Caco-2 (cell line): ENCODE measurements at regions of chr2 and their contacts with region 1.

Region 1: GRCh38 chr2:126244937-126245336 is 411.0 kb upstream of the GYPC start:
- DNase-seq: peak; percentile 62 to 72
- H3K4me3 ChIP-seq: no peak overlapping the region
- H3K4me3 Mint-ChIP-seq: no peak overlapping the region
- H3K27ac Mint-ChIP-seq: no peak overlapping the region
- H3K4me1 ChIP-seq: no peaks in the 10 kb centered on the region
- H3K4me1 Mint-ChIP-seq: no peaks in the 10 kb centered on the region
- H3K27me3 ChIP-seq: no peaks in the 10 kb centered on the region
- H3K27me3 Mint-ChIP-seq: no peaks in the 10 kb centered on the region
- CTCF ChIP-seq: peak; percentile 60 to 79

Region 2: DNA sequence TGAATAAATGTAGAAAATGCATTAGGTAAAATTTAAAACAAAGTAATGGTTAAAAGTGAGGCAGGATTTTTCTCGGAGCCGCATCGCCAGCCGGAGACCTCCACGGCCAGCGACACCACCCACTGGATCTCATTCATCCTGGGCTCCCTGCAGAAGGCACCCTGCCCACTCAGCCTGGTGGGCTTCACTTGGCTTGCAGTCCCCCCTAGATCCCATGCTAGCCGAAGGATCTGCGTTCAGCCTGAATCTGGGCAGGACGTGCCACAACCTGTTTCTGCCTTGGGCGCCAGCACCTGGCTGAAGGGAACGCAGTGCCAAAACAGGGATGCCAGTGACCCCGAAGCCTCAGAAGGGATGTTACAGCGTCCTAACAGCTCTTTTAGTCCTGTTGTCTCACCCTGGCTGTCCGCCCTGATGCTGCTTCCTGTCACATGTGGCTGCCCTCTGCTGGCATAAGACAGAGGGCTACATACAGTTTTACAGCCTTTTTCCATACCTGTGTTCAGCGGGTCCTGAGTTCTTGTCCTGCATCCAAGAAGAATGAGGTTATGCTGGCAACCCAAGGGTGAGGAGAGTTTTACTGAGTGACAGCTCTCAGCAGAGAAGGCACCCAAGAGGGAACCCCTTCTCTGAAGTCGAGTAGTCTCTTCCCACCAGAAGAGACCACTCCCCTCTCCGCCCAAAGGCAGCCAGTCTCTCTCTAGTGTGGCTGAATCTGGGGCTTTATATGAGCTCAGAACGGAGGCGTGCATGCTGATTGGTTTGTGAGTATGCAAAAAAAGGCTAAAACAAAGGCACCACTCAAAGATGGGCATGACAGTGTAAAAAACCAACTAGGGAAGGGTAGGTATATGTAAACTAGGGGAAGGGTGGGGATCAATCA is 237.9 kb after region 1 on chr2:
- CTCF ChIA-PET with region 1: no interaction called
- POLR2A ChIA-PET with region 1: no interaction called
- intact Hi-C with region 1: loop called (anchors 1 kb)
- DNase-seq: peak in 1 of 2 experiments; percentile 21
- H3K4me3 ChIP-seq: no peak overlapping the region
- H3K4me3 Mint-ChIP-seq: no peak overlapping the region
- H3K27ac Mint-ChIP-seq: no peak overlapping the region
- H3K4me1 ChIP-seq: no peaks in the 10 kb centered on the region
- H3K4me1 Mint-ChIP-seq: no peaks in the 10 kb centered on the region
- H3K27me3 ChIP-seq: no peaks in the 10 kb centered on the region
- H3K27me3 Mint-ChIP-seq: peaks cover 6% of the 10 kb centered on the region
- CTCF ChIP-seq: peak in 1 of 2 experiments; percentile 33

Region 3: DNA sequence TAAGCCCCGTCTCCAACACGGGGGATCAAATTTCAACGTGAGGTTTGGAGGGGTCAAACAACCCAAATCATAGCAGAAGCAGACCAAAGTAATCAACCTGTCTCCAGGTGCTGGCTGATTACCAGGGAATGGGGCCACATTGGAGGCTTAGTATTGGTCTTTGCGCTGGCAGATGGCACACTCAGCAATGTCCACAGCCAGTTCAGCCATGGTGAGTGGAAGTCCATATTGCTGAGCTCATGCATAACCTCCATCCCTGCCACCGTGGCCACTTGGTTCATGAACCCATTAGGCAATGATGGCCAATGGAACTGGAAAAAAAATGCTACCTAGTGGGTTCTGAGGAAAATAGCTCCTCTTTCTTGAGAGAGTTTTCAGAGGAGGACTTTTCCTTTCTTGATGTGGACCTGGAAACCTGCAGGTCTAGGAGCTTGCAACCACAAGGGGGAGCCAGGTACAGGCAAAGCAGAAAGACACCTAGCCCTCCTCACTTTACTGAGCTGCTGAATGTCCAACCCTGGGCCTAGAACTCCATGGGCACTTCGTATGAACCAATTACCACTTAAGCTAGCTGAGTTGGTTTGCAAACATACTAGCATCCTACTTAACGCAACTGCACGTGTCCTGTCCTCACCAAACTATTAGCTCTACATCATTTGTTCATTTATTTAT is 283.0 kb after region 1 on chr2:
- CTCF ChIA-PET with region 1: no interaction called
- POLR2A ChIA-PET with region 1: no interaction called
- intact Hi-C with region 1: loop called (anchors 1 kb)
- DNase-seq: peak; percentile 66 to 68
- H3K4me3 ChIP-seq: no peak overlapping the region
- H3K4me3 Mint-ChIP-seq: no peak overlapping the region
- H3K27ac Mint-ChIP-seq: no peak overlapping the region
- H3K4me1 ChIP-seq: no peaks in the 10 kb centered on the region
- H3K4me1 Mint-ChIP-seq: no peaks in the 10 kb centered on the region
- H3K27me3 ChIP-seq: no peaks in the 10 kb centered on the region
- H3K27me3 Mint-ChIP-seq: peaks cover 5% of the 10 kb centered on the region
- CTCF ChIP-seq: peak; percentile 58 to 76

Region 4: DNA sequence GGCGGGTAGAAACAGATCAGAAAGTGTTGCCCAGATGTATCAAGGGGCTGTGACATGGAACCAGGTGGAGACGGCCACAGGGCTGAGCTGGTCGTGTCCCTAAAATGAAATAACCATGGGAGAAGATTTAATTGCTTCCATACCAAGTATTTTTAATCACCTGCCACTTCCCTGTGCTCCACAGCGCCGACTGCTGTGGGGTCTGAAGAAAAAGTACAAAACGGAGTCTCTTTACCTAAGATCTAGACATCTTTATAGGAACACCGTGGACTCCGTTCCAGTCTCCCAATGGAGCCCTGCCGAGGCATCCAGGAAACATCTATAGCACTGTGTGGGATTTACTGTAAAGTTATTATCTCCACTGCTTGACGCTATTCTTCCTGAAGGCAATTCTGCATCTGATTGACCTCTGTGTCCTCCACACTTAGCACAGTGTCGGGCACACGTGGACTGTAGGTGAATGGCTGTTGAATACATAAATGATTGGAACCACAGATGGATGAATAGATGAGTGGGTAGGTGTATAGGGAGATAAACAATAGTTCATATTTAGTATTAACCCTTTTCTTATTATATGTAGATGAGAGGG is 389.4 kb after region 1 on chr2:
- CTCF ChIA-PET with region 1: no interaction called
- POLR2A ChIA-PET with region 1: no interaction called
- intact Hi-C with region 1: loop called (anchors 1 kb)
- DNase-seq: peak in 1 of 2 experiments; percentile 49
- H3K4me3 ChIP-seq: no peak overlapping the region
- H3K4me3 Mint-ChIP-seq: no peak overlapping the region
- H3K27ac Mint-ChIP-seq: no peak overlapping the region
- H3K4me1 ChIP-seq: no peaks in the 10 kb centered on the region
- H3K4me1 Mint-ChIP-seq: no peaks in the 10 kb centered on the region
- H3K27me3 ChIP-seq: no peaks in the 10 kb centered on the region
- H3K27me3 Mint-ChIP-seq: peaks cover 14% of the 10 kb centered on the region
- CTCF ChIP-seq: peak; percentile 78 to 87